ENCODE measurements at regions of chr3 and their contacts with region 1.

Region 1: DNA sequence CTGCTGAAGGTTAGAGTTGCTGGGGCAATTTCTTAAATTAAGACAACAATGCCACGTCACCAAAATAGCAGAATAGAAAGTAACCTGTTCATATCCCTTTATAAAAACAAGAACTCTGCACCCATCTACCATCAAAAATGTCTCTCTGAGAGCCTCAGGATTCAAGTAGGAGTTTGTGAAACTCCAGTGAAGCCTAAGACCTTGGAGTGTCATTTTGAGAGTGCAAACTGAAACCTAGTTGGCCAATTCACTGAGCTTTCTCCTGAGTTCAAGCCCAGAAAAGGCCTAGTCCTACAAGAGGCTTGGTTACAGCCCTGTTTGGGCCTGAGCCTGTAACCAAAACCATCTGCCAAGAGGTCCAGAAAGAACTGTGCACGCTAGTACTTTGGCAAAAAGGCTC is 335.1 kb downstream of the EFHB start:
- DNase-seq: no peak
- ATAC-seq: no peak
- H3K4me3 ChIP-seq: no peak overlapping the region
- H3K27ac ChIP-seq: no peak overlapping the region
- H3K4me1 ChIP-seq: no peaks in the 10 kb centered on the region
- H3K27me3 ChIP-seq: no peaks in the 10 kb centered on the region
- CTCF ChIP-seq: no peak
- EP300 ChIP-seq: no peak
- POLR2A ChIP-seq: no peak
- RAD21 ChIP-seq: no peak

Region 2: GRCh38 chr3:19348929-19349564 is 249.8 kb before region 1 on chr3:
- CTCF ChIA-PET with region 1: no interaction called
- POLR2A ChIA-PET with region 1: no interaction called
- in situ Hi-C with region 1: no loop called
- intact Hi-C with region 1: loop called (anchors 5 kb)
- DNase-seq: peak; percentile 16 to 50 (median 40)
- ATAC-seq: peak; percentile 61; the same call in 1 of the 3 replicates
- H3K4me3 ChIP-seq: no peak overlapping the region
- H3K27ac ChIP-seq: no peak overlapping the region
- H3K4me1 ChIP-seq: no peaks in the 10 kb centered on the region
- H3K27me3 ChIP-seq: no peaks in the 10 kb centered on the region
- CTCF ChIP-seq: peak; percentile 48 to 55 (median 50); a peak in 4 of 6 replicates
- EP300 ChIP-seq: no peak
- POLR2A ChIP-seq: no peak
- RAD21 ChIP-seq: peak; percentile 56 to 60

Measured in K562 (cell line).